ENCODE measurements at regions of chr11 and their contacts with region 1.

Region 1: GRCh38 chr11:12914400-12914912 is 94.7 kb upstream of the RASSF10 start:
- DNase-seq: peak; percentile 87 to 89
- H3K4me3 ChIP-seq: peak overlapping the region in 1 of 4 experiments; percentile 21; a peak in 2 of 8 replicates
- H3K27ac ChIP-seq: peak overlapping the region; percentile 20; the same call in 1 of the 2 replicates
- H3K4me1 ChIP-seq: peaks cover 7 to 18% (median 10%) of the 10 kb centered on the region in 4 experiments
- H3K27me3 ChIP-seq: no peaks in the 10 kb centered on the region
- CTCF ChIP-seq: peak; percentile 86 to 98 (median 94)
- EP300 ChIP-seq: no peak; a peak in 1 of 3 replicates
- POLR2A ChIP-seq: 0 out of 3 replicates have a peak, but pooled peaks of 1 of the 2 experiments have one; percentile 30
- RAD21 ChIP-seq: peak; percentile 72 to 76

Region 2: GRCh38 chr11:12318791-12319438 is 595.5 kb before region 1 on chr11:
- CTCF ChIA-PET with region 1: no interaction called
- POLR2A ChIA-PET with region 1: no interaction called
- DNase-seq: no peak
- H3K4me3 ChIP-seq: no peak overlapping the region
- H3K27ac ChIP-seq: no peak overlapping the region
- H3K4me1 ChIP-seq: peaks cover 0 to 9% (median 0%) of the 10 kb centered on the region in 4 experiments; a peak in 3 of 7 replicates
- H3K27me3 ChIP-seq: no peaks in the 10 kb centered on the region
- CTCF ChIP-seq: no peak
- EP300 ChIP-seq: no peak
- POLR2A ChIP-seq: no peak
- RAD21 ChIP-seq: no peak

Region 3: GRCh38 chr11:12731841-12732336 is 182.6 kb before region 1 on chr11:
- CTCF ChIA-PET with region 1: no interaction called
- POLR2A ChIA-PET with region 1: no interaction called
- DNase-seq: no peak
- H3K4me3 ChIP-seq: no peak overlapping the region
- H3K27ac ChIP-seq: no peak overlapping the region
- H3K4me1 ChIP-seq: peaks cover 0 to 8% (median 0%) of the 10 kb centered on the region in 4 experiments; a peak in 1 of 7 replicates
- H3K27me3 ChIP-seq: peaks cover 0 to 1% (median 0%) of the 10 kb centered on the region in 4 experiments; a peak in 2 of 7 replicates
- CTCF ChIP-seq: no peak
- EP300 ChIP-seq: no peak
- POLR2A ChIP-seq: no peak
- RAD21 ChIP-seq: no peak

Region 4: GRCh38 chr11:12864316-12865156 is 49.9 kb before region 1 on chr11:
- CTCF ChIA-PET with region 1: no interaction called
- POLR2A ChIA-PET with region 1: no interaction called
- DNase-seq: peak in 1 of 2 experiments; percentile 75
- H3K4me3 ChIP-seq: peak overlapping the region; percentile 9 to 50 (median 13); a peak in 5 of 8 replicates
- H3K27ac ChIP-seq: peak overlapping the region; percentile 95
- H3K4me1 ChIP-seq: peaks cover 6 to 29% (median 26%) of the 10 kb centered on the region in 4 experiments
- H3K27me3 ChIP-seq: no peaks in the 10 kb centered on the region
- CTCF ChIP-seq: no peak
- EP300 ChIP-seq: peak in 1 of 2 experiments; percentile 95; a peak in 1 of 3 replicates
- POLR2A ChIP-seq: peak; percentile 6 to 9; a peak in 2 of 3 replicates
- RAD21 ChIP-seq: no peak

Region 5: DNA sequence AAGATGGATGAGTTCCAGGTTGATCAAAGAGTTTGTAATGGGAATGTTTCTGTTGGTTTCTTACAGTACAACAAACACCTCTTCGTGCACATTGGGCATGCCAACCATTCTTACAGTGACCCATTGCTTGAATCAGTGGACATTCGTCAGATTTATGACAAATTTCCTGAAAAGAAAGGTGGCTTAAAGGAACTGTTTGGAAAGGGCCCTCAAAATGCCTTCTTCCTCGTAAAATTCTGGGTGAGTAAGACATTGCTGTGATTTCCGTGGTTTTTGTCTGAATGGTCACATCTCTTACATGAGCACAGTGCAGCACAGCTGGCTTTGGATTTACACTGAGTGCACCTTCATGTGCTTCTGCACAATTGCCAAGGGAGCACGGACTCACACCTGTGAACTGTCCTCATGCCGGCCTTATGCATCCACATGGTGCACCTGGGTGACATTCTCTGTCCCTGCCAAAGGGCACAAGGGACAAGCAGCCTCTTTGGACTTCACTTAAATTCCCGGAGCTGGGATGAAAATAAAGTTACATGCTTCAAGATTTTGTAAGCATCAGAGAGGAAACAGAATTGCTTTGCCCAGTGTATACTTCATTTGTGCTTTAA is 12.5 kb before region 1 on chr11:
- CTCF ChIA-PET with region 1: interaction called, 11 read pairs
- POLR2A ChIA-PET with region 1: no interaction called
- DNase-seq: no peak
- H3K4me3 ChIP-seq: no peak overlapping the region
- H3K27ac ChIP-seq: no peak overlapping the region
- H3K4me1 ChIP-seq: peaks cover 2 to 10% (median 5%) of the 10 kb centered on the region in 4 experiments; a peak in 4 of 7 replicates
- H3K27me3 ChIP-seq: no peaks in the 10 kb centered on the region
- CTCF ChIP-seq: no peak
- EP300 ChIP-seq: no peak
- POLR2A ChIP-seq: no peak
- RAD21 ChIP-seq: no peak

Region 6: DNA sequence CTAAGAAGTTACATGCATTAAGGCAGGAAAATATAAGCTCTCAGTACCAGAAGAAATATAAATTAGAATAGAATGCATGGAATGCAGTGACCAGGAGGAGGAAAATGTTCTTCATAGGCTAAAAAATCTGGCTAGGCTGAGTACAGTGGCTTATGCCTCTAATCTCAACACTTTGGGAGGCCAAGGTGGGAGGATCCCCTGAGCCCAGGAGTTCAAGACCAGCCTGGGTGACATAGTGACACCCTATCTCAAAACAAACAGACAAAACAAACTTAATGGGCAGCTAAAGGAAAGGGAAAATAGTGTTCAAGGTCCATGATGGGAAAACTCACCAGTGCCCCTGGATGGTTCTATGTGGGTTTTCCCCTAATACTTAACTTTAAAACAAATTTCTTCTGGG is 16.4 kb after region 1 on chr11:
- CTCF ChIA-PET with region 1: interaction called, 13 read pairs
- POLR2A ChIA-PET with region 1: no interaction called
- DNase-seq: no peak
- H3K4me3 ChIP-seq: no peak overlapping the region
- H3K27ac ChIP-seq: no peak overlapping the region
- H3K4me1 ChIP-seq: no peaks in the 10 kb centered on the region
- H3K27me3 ChIP-seq: no peaks in the 10 kb centered on the region
- CTCF ChIP-seq: no peak
- EP300 ChIP-seq: no peak
- POLR2A ChIP-seq: no peak
- RAD21 ChIP-seq: no peak

Region 7: GRCh38 chr11:12938590-12939247 is 24.3 kb after region 1 on chr11:
- CTCF ChIA-PET with region 1: interaction called, 11 read pairs
- POLR2A ChIA-PET with region 1: no interaction called
- DNase-seq: no peak
- H3K4me3 ChIP-seq: no peak overlapping the region
- H3K27ac ChIP-seq: no peak overlapping the region
- H3K4me1 ChIP-seq: no peaks in the 10 kb centered on the region
- H3K27me3 ChIP-seq: no peaks in the 10 kb centered on the region
- CTCF ChIP-seq: no peak
- EP300 ChIP-seq: no peak
- POLR2A ChIP-seq: no peak
- RAD21 ChIP-seq: no peak

Measured in H1 (cell line).